ENCODE measurements at regions of chr4 and their contacts with region 1.

Region 1: DNA sequence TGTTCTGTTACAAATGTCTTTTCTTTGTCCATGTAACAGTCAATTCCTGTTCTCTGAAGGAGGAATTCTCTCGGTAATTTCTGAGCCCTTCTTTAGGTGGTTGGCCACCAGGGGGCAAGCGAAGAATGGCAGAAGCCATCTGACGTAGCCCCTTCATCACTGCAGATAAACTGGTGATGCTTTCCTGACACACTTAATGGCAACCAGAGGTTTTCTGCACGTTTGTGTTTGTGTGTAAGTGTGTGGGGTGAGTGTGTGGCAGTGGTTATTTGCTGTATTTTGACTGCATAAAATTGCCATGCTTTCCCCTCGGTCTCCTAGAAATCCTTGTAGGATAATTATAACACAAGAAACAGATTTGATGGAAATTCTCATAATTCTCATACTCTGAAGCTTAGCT is 64.8 kb upstream of the STOX2 start:
- DNase-seq: peak; percentile 83
- H3K4me3 ChIP-seq: no peak overlapping the region
- H3K27ac ChIP-seq: no peak overlapping the region
- H3K4me1 ChIP-seq: peaks cover 0 to 8% (median 3%) of the 10 kb centered on the region in 4 donors
- H3K27me3 ChIP-seq: no peaks in the 10 kb centered on the region
- CTCF ChIP-seq: peak; percentile 71 to 91 (median 81)
- EP300 ChIP-seq: no peak
- POLR2A ChIP-seq: no peak

Region 2: DNA sequence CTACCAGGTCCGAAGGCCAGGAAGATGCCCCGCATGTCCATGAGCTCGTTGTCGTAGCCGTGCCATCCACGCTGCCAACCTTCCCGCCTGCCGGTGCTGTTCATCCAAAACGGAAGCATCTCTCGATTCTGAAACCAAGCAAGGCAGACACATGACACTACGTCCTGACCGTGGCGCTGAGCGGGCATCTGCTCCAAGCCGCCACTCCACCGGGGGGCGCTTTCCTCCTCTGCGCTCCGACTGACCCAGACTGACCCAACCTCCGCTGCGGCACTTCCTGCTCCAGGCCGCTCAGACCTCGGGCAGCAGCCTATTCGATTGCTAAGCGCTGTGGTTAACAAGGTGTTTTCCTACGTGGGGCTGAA is 256.9 kb after region 1 on chr4:
- intact Hi-C with region 1: loop called (anchors 2 kb)
- DNase-seq: peak; percentile 81
- H3K4me3 ChIP-seq: peak overlapping the region in 3 of 4 donors; percentile 30 to 37 (median 33)
- H3K27ac ChIP-seq: peak overlapping the region in 2 of 4 donors; percentile 0 to 29
- H3K4me1 ChIP-seq: peaks cover 0 to 26% (median 20%) of the 10 kb centered on the region in 4 donors
- H3K27me3 ChIP-seq: no peaks in the 10 kb centered on the region
- CTCF ChIP-seq: peak in 3 of 4 experiments; percentile 11 to 22 (median 20)
- EP300 ChIP-seq: no peak
- POLR2A ChIP-seq: no peak